ENCODE measurements at regions of chr16 and their contacts with region 1.

Region 1: DNA sequence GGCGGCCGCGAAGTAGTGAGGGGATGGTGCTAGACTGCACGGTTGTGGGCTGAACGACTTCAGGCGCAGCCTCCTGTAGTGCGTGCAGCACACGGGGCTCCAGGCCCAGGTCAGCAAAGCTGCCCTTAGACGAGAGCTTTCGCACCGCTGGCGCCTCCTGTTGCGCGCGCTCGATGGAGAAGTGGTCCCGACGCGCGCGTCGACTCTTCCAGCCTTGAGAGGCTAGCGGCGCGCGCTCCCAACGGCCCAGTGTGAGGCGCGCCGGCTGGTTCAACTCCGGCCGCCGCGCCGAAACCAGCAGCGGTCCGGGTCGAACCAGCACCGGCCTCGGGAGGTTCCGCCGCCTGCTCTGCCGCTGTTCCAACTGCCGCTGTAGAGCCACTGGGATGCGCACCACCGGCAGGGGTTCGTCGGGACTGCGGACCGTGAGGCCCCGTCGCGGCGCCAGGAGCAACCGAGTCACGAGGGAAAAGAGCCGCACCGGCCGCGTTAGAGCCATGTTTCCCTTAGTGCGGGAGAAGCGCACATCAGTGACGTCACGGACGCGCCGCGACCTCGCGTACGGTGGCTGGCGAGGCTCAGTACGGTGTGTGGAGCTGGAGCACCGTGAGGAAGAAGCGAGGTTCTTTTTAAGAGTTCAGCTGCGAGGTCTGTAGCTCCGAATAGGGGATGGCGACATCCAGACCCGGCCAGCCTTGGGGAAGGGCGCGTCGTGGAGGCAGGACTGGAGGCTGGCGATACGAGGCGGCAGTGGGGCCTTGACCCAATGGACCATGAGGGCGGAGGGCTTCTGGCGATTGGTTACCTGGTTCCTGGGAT is at the starts of genes DDX28 and DUS2:
- DNase-seq: peak; percentile 88 to 98 (median 94)
- ATAC-seq: peak; percentile 95
- H3K4me3 ChIP-seq: peak within 1 kb of the TSS; percentile 85
- H3K4me3 Mint-ChIP-seq: peak within 1 kb of the TSS; percentile 93
- H3K27ac ChIP-seq: peak within 1 kb of the TSS; percentile 78 to 83
- H3K27ac Mint-ChIP-seq: peak within 1 kb of the TSS; percentile 90
- H3K4me1 ChIP-seq: peaks cover 30% of the 10 kb centered on the region
- H3K4me1 Mint-ChIP-seq: peaks cover 28% of the 10 kb centered on the region
- H3K27me3 ChIP-seq: no peaks in the 10 kb centered on the region
- H3K27me3 Mint-ChIP-seq: no peaks in the 10 kb centered on the region
- CTCF ChIP-seq: no peak
- total RNA-seq, gene DDX28: 18.9 to 19.4 TPM
- total RNA-seq, gene DUS2: 10.4 to 13.6 TPM

Region 2: DNA sequence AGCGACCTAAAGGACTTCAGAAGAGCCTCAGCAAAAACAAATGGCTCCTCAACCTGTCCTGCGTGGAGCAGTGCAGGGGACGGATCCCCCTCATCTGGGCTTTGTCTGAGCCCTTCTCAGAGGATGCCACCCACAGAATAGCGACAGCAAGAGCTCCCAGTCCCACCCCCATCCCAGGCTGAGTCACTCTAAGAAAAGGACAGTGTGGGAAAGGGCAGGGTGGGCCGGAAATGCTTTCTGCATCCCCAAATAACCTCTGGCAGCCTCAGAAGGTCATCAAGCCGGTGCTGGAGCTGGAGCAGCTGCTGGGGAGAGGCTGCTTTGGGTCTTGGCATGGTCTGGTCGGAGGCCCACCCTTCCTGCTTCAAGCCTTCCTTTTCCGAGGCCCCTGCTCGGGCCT is 63.4 kb before region 1 on chr16:
- CTCF ChIA-PET with region 1: no interaction called
- POLR2A ChIA-PET with region 1: no interaction called
- intact Hi-C with region 1: no loop called
- DNase-seq: no peak
- ATAC-seq: no peak
- H3K4me3 ChIP-seq: no peak overlapping the region
- H3K4me3 Mint-ChIP-seq: no peak overlapping the region
- H3K27ac ChIP-seq: no peak overlapping the region
- H3K27ac Mint-ChIP-seq: no peak overlapping the region
- H3K4me1 ChIP-seq: no peaks in the 10 kb centered on the region
- H3K4me1 Mint-ChIP-seq: no peaks in the 10 kb centered on the region
- H3K27me3 ChIP-seq: no peaks in the 10 kb centered on the region
- H3K27me3 Mint-ChIP-seq: no peaks in the 10 kb centered on the region
- CTCF ChIP-seq: no peak

Region 3: DNA sequence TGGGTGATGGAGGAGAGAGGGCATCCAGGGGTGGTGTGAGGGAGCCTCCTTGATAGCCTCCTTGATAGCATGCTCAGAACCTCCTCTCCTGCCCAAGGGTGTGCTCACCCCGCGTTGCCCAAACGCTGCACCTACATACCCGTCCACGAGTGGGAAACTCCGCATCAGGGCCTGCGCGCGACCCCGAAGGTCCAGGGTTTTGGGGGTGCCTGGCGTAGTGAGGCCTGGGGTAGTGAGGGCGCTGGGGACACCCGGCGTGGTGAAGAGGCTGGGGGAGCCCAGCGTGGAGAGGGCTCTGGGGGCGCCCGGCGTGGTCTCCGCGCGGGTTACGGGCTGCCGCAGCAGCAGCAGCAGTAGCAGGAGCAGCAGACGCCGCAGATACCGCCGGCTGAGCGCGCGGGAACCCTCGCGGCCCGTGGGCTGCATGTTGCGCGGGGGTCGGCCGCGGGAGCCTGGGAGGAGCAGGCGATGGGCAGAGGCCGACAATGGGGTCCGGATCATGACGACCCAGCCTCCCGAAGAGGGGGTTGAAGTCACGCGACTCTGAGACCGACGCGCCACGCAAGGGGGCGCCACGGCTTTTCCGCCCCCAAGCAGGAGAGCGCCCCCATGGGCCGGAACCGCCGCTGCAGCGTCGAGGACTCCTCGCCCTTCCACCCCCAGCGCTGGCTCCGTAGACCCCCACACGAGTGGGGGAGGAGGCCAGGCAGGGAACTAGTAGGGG is 42.8 kb before region 1 on chr16 and contains the start of gene DPEP3:
- CTCF ChIA-PET with region 1: no interaction called
- POLR2A ChIA-PET with region 1: interaction called, 16 read pairs
- intact Hi-C with region 1: no loop called
- DNase-seq: peak in 2 of 14 experiments; percentile 31 to 49
- ATAC-seq: no peak
- H3K4me3 ChIP-seq: no peak within 1 kb of the TSS
- H3K4me3 Mint-ChIP-seq: no peak within 1 kb of the TSS
- H3K27ac ChIP-seq: no peak within 1 kb of the TSS
- H3K27ac Mint-ChIP-seq: no peak within 1 kb of the TSS
- H3K4me1 ChIP-seq: peaks cover 23% of the 10 kb centered on the region
- H3K4me1 Mint-ChIP-seq: peaks cover 23% of the 10 kb centered on the region
- H3K27me3 ChIP-seq: no peaks in the 10 kb centered on the region
- H3K27me3 Mint-ChIP-seq: no peaks in the 10 kb centered on the region
- CTCF ChIP-seq: no peak
- total RNA-seq, gene DPEP3: 0.53 to 0.63 TPM

Region 4: GRCh38 chr16:67993189-67994039 is 29.5 kb before region 1 on chr16:
- CTCF ChIA-PET with region 1: interaction called, 6 read pairs
- POLR2A ChIA-PET with region 1: interaction called, 73 read pairs
- intact Hi-C with region 1: loop called (anchors 2 kb)
- DNase-seq: peak; percentile 69 to 93 (median 78)
- ATAC-seq: peak; percentile 91
- H3K4me3 ChIP-seq: peak overlapping the region; percentile 63
- H3K4me3 Mint-ChIP-seq: peak overlapping the region; percentile 89
- H3K27ac ChIP-seq: peak overlapping the region; percentile 76 to 90
- H3K27ac Mint-ChIP-seq: peak overlapping the region; percentile 93
- H3K4me1 ChIP-seq: peaks cover 55% of the 10 kb centered on the region
- H3K4me1 Mint-ChIP-seq: peaks cover 36% of the 10 kb centered on the region
- H3K27me3 ChIP-seq: no peaks in the 10 kb centered on the region
- H3K27me3 Mint-ChIP-seq: no peaks in the 10 kb centered on the region
- CTCF ChIP-seq: peak; percentile 92

Region 5: GRCh38 chr16:67999985-68000384 is 22.9 kb before region 1 on chr16:
- CTCF ChIA-PET with region 1: interaction called, 6 read pairs
- POLR2A ChIA-PET with region 1: interaction called, 73 read pairs
- intact Hi-C with region 1: no loop called
- DNase-seq: peak in 3 of 14 experiments; percentile 6 to 34 (median 22)
- ATAC-seq: peak; percentile 11
- H3K4me3 ChIP-seq: peak overlapping the region; percentile 61
- H3K4me3 Mint-ChIP-seq: peak overlapping the region; percentile 86
- H3K27ac ChIP-seq: peak overlapping the region; percentile 48 to 83
- H3K27ac Mint-ChIP-seq: peak overlapping the region; percentile 93
- H3K4me1 ChIP-seq: peaks cover 70% of the 10 kb centered on the region
- H3K4me1 Mint-ChIP-seq: peaks cover 55% of the 10 kb centered on the region
- H3K27me3 ChIP-seq: no peaks in the 10 kb centered on the region
- H3K27me3 Mint-ChIP-seq: no peaks in the 10 kb centered on the region
- CTCF ChIP-seq: no peak

Region 6: GRCh38 chr16:68005786-68006286 is 17.1 kb before region 1 on chr16:
- CTCF ChIA-PET with region 1: interaction called, 3 read pairs
- POLR2A ChIA-PET with region 1: interaction called, 73 read pairs
- intact Hi-C with region 1: no loop called
- DNase-seq: peak; percentile 35 to 82 (median 61)
- ATAC-seq: peak; percentile 96
- H3K4me3 ChIP-seq: no peak overlapping the region
- H3K4me3 Mint-ChIP-seq: peak overlapping the region; percentile 74
- H3K27ac ChIP-seq: peak overlapping the region; percentile 62 to 84
- H3K27ac Mint-ChIP-seq: peak overlapping the region; percentile 97
- H3K4me1 ChIP-seq: peaks cover 49% of the 10 kb centered on the region
- H3K4me1 Mint-ChIP-seq: peaks cover 48% of the 10 kb centered on the region
- H3K27me3 ChIP-seq: no peaks in the 10 kb centered on the region
- H3K27me3 Mint-ChIP-seq: no peaks in the 10 kb centered on the region
- CTCF ChIP-seq: no peak